ENCODE measurements at regions of chr4 and their contacts with region 1.

Region 1: GRCh38 chr4:184825896-184826690 is at the start of gene ACSL1:
- DNase-seq: peak; percentile 77
- ATAC-seq: peak; percentile 78
- H3K4me3 Mint-ChIP-seq: peak within 1 kb of the TSS; percentile 94
- H3K27ac Mint-ChIP-seq: peak within 1 kb of the TSS; percentile 91
- H3K4me1 Mint-ChIP-seq: peaks cover 42% of the 10 kb centered on the region
- H3K27me3 Mint-ChIP-seq: no peaks in the 10 kb centered on the region
- CTCF ChIP-seq: no peak
- total RNA-seq, gene ACSL1: 46.3 and 47.0 TPM in 2 replicates

Region 2: DNA sequence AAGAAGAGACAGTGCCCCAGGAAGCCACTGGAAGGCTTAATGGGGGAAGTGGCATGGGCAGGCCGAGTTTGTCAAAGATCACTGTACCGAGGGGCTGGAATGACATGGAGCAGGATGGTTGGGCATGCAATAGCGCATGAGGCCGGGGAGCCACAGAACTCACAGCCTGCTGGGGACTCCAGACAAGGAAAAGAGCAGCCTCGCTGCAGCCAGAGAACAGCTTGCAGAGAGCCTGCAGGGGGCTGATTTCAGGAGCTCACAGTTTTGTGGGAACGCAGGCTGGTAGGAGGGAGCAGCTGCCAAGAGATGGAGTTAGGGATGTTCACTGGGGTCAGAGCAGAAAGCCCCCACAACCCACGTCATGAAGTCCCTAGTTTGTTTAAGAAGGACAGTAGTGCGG is 875.6 kb before region 1 on chr4:
- CTCF ChIA-PET with region 1: no interaction called
- POLR2A ChIA-PET with region 1: no interaction called
- intact Hi-C with region 1: no loop called
- DNase-seq: no peak
- ATAC-seq: no peak
- H3K4me3 Mint-ChIP-seq: no peak overlapping the region
- H3K27ac Mint-ChIP-seq: no peak overlapping the region
- H3K4me1 Mint-ChIP-seq: no peaks in the 10 kb centered on the region
- H3K27me3 Mint-ChIP-seq: peaks cover 6% of the 10 kb centered on the region
- CTCF ChIP-seq: no peak

Region 3: DNA sequence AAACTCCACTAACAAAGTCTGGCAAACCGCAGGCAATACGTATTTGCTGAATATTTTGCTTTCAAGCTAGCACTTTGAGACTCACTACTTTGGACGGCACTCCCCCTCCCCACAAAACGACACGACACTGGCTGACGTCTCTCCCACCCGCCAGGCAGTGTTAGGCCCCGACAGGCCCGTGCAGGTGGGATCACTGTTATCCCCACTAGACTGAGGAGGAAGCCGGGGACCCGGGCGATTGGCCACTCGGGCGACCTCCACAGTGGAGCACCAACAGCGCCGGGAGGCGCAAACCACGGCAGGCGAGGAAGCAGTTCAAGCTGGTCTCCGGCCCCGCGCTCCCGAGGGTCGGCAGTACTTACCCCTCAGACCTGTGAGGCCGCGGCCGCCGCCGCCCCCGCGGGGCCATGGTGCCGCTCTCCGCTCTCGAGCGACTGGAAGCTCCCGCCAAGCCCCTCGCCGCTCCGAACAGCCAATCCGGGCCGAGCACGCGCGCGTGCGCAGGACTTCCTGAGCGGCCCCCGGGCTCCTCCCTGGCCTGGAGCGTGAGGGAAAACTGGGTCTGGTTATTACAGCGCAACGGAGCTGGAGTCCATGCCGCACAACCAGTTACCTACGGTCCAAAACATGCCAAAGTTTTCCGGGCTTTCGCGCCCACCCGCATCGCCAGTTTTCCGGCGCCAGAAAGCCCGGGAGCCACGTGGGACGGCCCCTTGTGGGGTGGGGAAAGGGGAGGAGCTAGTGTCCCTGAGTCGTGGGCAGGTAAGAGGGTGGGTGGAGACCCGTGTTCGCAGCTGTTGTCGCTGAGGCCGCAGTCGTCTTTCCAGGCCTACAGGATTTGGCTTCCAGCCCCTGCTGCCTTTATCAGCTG is 92.2 kb before region 1 on chr4 and contains the start of gene CENPU:
- CTCF ChIA-PET with region 1: no interaction called
- POLR2A ChIA-PET with region 1: interaction called, 5 read pairs
- intact Hi-C with region 1: loop called (anchors 1 kb)
- DNase-seq: peak; percentile 95
- ATAC-seq: peak; percentile 96
- H3K4me3 Mint-ChIP-seq: peak within 1 kb of the TSS; percentile 88
- H3K27ac Mint-ChIP-seq: peak within 1 kb of the TSS; percentile 85
- H3K4me1 Mint-ChIP-seq: peaks cover 19% of the 10 kb centered on the region
- H3K27me3 Mint-ChIP-seq: no peaks in the 10 kb centered on the region
- CTCF ChIP-seq: no peak
- total RNA-seq, gene CENPU: 7.0 and 7.1 TPM in 2 replicates

Region 4: GRCh38 chr4:184805462-184806228 is 20.4 kb before region 1 on chr4:
- CTCF ChIA-PET with region 1: interaction called, 5 read pairs
- POLR2A ChIA-PET with region 1: interaction called, 5 read pairs
- intact Hi-C with region 1: loop called (anchors 1 kb)
- DNase-seq: peak; percentile 26
- ATAC-seq: peak; percentile 89
- H3K4me3 Mint-ChIP-seq: peak overlapping the region; percentile 33
- H3K27ac Mint-ChIP-seq: peak overlapping the region; percentile 54
- H3K4me1 Mint-ChIP-seq: peaks cover 39% of the 10 kb centered on the region
- H3K27me3 Mint-ChIP-seq: no peaks in the 10 kb centered on the region
- CTCF ChIP-seq: no peak

Region 5: GRCh38 chr4:184896868-184897715 is 71.0 kb after region 1 on chr4:
- CTCF ChIA-PET with region 1: no interaction called
- POLR2A ChIA-PET with region 1: interaction called, 14 read pairs
- intact Hi-C with region 1: loop called (anchors 2 kb)
- DNase-seq: peak; percentile 38
- ATAC-seq: peak; percentile 84
- H3K4me3 Mint-ChIP-seq: peak overlapping the region; percentile 78
- H3K27ac Mint-ChIP-seq: peak overlapping the region; percentile 80
- H3K4me1 Mint-ChIP-seq: peaks cover 45% of the 10 kb centered on the region
- H3K27me3 Mint-ChIP-seq: peaks cover 9% of the 10 kb centered on the region
- CTCF ChIP-seq: no peak

Region 6: DNA sequence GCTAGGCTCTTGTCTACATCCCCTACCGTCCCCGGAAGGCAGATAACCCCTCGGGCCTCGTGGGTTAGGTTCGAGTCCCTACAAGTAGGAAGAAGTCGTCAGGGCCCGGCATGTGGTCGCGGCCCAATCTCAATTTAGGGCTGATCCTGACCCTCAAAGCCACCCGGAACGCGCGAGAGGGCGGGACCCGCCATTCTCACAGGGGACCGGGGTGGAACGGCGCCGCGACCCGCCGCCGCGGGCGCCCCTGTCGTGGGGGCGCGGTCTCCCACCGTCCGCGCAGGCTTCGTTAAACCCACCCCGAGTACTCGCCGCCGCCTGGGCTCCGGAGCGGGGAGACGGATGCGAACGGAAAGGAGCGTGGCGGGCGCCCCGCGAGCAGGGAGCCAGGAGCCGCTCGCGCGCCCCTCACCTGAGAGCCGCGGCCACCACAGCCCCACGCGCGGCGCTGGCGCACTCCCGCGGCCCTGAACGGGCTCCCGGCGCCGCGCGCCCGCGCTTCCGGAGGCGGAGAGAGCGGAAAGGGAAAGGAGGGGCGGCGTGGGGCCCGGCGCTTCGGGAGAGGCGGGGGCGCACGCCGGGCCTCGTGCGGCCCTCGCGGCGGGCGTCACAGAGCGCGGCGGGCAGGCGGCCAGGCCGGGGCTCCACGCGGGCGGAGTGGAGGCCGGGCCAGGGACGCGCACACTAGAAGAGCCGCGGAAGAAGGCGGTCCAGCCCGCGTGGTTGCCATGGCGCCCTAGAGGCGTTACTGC is 377.6 kb after region 1 on chr4 and contains the start of gene CFAP97:
- CTCF ChIA-PET with region 1: no interaction called
- POLR2A ChIA-PET with region 1: no interaction called
- intact Hi-C with region 1: loop called (anchors 10 kb)
- DNase-seq: peak; percentile 82
- ATAC-seq: peak; percentile 81
- H3K4me3 Mint-ChIP-seq: peak within 1 kb of the TSS; percentile 93
- H3K27ac Mint-ChIP-seq: peak within 1 kb of the TSS; percentile 97
- H3K4me1 Mint-ChIP-seq: peaks cover 47% of the 10 kb centered on the region
- H3K27me3 Mint-ChIP-seq: no peaks in the 10 kb centered on the region
- CTCF ChIP-seq: no peak
- total RNA-seq, gene CFAP97: 42.6 and 44.1 TPM in 2 replicates